ENCODE measurements at regions of chr12 and their contacts with region 1.

Region 1: GRCh38 chr12:107607464-107608392 is 77.9 kb upstream of the PWP1 start:
- DNase-seq: peak; percentile 79 to 83 (median 80)
- ATAC-seq: peak; percentile 97
- H3K4me3 ChIP-seq: no peak overlapping the region
- H3K27ac ChIP-seq: no peak overlapping the region
- H3K4me1 ChIP-seq: no peaks in the 10 kb centered on the region; a peak in 1 of 5 replicates
- H3K27me3 ChIP-seq: peaks cover 10 to 14% of the 10 kb centered on the region in 2 experiments; a peak in 3 of 5 replicates
- CTCF ChIP-seq: peak; percentile 87 to 93 (median 92)
- EP300 ChIP-seq: no peak
- POLR2A ChIP-seq: no peak
- RAD21 ChIP-seq: peak; percentile 61 to 87

Region 2: DNA sequence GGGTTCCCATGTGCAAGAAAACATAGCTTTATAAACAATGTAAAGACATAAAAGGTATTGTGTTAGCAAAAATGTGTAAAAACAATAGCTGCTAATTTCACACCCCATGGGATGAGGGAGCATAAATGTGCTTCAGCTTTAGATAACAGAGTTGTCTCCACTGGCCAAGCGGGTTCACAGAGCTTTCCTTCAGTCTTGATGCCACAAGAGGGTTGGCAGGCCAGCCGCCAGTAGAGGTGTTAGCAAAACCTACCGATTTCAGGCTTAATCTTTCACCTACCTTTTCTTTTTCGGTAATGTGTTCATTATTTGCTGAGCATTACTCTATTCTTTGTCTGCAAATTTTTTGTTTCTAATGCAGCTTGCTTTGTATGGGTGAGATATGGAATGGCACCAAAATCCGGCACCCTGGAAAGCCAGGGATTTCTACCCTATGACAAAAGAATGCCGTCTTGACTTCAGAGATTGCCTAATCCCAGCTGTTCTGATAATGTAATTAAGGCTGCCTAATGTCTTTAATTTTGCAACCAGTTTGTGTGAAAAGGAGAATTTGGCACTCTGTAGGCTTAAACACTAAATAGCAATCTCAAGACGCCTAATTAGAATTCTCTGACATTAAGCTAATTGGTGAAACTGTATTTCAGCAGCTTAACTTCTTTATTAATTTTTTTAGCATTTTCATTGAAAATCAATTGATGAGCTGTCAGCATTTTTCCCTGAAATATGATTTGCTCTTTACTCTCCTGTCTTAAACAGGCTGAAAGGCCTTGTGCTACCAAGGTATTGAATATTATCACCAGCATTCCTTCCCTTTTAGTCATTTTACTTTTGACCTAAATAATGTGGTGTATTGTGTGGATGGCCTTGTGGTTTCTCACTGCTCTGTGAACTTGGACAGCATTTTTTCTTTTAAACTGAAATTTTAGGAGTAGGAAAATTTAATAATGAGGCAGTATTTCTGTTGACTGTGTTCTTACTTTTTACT is 1189.5 kb before region 1 on chr12:
- CTCF ChIA-PET with region 1: no interaction called
- POLR2A ChIA-PET with region 1: no interaction called
- in situ Hi-C with region 1: no loop called
- intact Hi-C with region 1: no loop called
- DNase-seq: no peak
- ATAC-seq: no peak
- H3K4me3 ChIP-seq: no peak overlapping the region
- H3K27ac ChIP-seq: no peak overlapping the region
- H3K4me1 ChIP-seq: no peaks in the 10 kb centered on the region
- H3K27me3 ChIP-seq: no peaks in the 10 kb centered on the region
- CTCF ChIP-seq: no peak
- EP300 ChIP-seq: no peak
- POLR2A ChIP-seq: no peak
- RAD21 ChIP-seq: no peak

Region 3: GRCh38 chr12:106945261-106945851 is 662.4 kb before region 1 on chr12:
- CTCF ChIA-PET with region 1: no interaction called
- POLR2A ChIA-PET with region 1: no interaction called
- in situ Hi-C with region 1: loop called (anchors 25 kb)
- intact Hi-C with region 1: no loop called
- DNase-seq: peak in 1 of 4 experiments; percentile 31
- ATAC-seq: no peak
- H3K4me3 ChIP-seq: no peak overlapping the region
- H3K27ac ChIP-seq: no peak overlapping the region
- H3K4me1 ChIP-seq: peaks cover 10 to 28% of the 10 kb centered on the region in 2 experiments; a peak in 4 of 5 replicates
- H3K27me3 ChIP-seq: no peaks in the 10 kb centered on the region
- CTCF ChIP-seq: no peak
- EP300 ChIP-seq: no peak
- POLR2A ChIP-seq: no peak
- RAD21 ChIP-seq: no peak

Region 4: GRCh38 chr12:107131832-107132616 is 475.7 kb before region 1 on chr12:
- CTCF ChIA-PET with region 1: interaction called, 3 read pairs
- POLR2A ChIA-PET with region 1: interaction called, 3 read pairs
- in situ Hi-C with region 1: loop called (anchors 5 kb)
- intact Hi-C with region 1: loop called (anchors 1 kb)
- DNase-seq: peak; percentile 44 to 67 (median 58)
- ATAC-seq: peak; percentile 84
- H3K4me3 ChIP-seq: no peak overlapping the region
- H3K27ac ChIP-seq: no peak overlapping the region
- H3K4me1 ChIP-seq: no peaks in the 10 kb centered on the region
- H3K27me3 ChIP-seq: no peaks in the 10 kb centered on the region
- CTCF ChIP-seq: peak; percentile 72 to 93 (median 84)
- EP300 ChIP-seq: no peak
- POLR2A ChIP-seq: no peak
- RAD21 ChIP-seq: peak; percentile 82 to 91

Region 5: DNA sequence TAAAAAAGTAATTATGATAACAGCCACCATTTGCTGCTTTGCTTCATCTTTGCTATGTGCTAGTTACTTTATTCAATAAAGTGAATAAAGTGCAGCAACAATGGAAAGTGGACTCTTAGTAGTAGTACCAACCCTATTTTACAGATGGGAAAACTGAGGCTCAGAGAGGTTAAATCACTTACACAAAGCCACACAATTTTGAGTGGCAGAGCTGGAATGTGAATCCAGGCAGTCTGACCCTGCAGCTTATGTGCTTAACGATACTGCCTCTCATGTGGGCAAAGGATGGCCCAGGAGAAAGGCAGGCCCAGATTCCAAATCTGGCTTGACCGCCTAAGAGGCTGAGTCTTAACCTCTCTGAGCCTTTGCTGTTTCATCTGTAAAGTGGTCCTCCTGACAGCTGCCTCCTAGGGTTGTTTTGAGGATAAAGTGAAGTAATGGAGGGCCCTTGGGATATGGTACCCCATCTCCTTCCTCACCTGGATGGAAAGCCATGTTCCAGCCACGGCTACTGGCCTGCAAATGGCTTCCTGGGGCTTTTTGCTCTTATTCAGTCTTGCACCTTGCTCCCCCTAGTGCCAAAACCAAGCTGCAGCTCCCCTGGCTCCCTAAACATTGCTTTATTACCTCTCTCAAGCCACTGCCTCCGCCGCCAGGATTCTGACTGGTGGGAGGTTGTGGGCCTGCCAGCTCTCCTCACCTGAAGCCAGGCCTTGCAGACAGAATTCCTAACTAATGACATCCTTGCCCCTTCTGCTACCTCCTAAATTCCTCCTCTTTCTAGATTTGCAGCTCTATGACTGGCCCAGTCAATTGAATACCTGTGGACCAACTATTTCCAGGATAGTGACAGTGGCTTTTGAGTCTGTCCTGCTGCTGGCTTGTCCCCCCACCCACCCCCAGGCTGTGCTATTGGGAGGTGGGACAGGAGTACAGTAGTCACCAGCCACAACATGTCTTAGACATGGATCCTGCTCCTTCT is 205.4 kb before region 1 on chr12:
- CTCF ChIA-PET with region 1: no interaction called
- POLR2A ChIA-PET with region 1: interaction called, 3 read pairs
- in situ Hi-C with region 1: no loop called
- intact Hi-C with region 1: loop called (anchors 10 kb)
- DNase-seq: peak; percentile 32 to 60 (median 44)
- ATAC-seq: peak; percentile 90
- H3K4me3 ChIP-seq: no peak overlapping the region
- H3K27ac ChIP-seq: no peak overlapping the region
- H3K4me1 ChIP-seq: no peaks in the 10 kb centered on the region
- H3K27me3 ChIP-seq: peaks cover 0 to 3% of the 10 kb centered on the region in 2 experiments; a peak in 1 of 5 replicates
- CTCF ChIP-seq: peak; percentile 65 to 74 (median 73)
- EP300 ChIP-seq: no peak
- POLR2A ChIP-seq: no peak
- RAD21 ChIP-seq: peak; percentile 15 to 60; a peak in 2 of 4 replicates

Region 6: GRCh38 chr12:107448198-107448597 is 159.5 kb before region 1 on chr12:
- CTCF ChIA-PET with region 1: no interaction called
- POLR2A ChIA-PET with region 1: interaction called, 4 read pairs
- in situ Hi-C with region 1: no loop called
- intact Hi-C with region 1: loop called (anchors 5 kb)
- DNase-seq: peak; percentile 18 to 48 (median 32)
- ATAC-seq: peak; percentile 69
- H3K4me3 ChIP-seq: no peak overlapping the region
- H3K27ac ChIP-seq: no peak overlapping the region
- H3K4me1 ChIP-seq: no peaks in the 10 kb centered on the region
- H3K27me3 ChIP-seq: peaks cover 0 to 15% of the 10 kb centered on the region in 2 experiments; a peak in 2 of 5 replicates
- CTCF ChIP-seq: peak; percentile 52 to 62 (median 55)
- EP300 ChIP-seq: no peak
- POLR2A ChIP-seq: no peak
- RAD21 ChIP-seq: no peak

Region 7: DNA sequence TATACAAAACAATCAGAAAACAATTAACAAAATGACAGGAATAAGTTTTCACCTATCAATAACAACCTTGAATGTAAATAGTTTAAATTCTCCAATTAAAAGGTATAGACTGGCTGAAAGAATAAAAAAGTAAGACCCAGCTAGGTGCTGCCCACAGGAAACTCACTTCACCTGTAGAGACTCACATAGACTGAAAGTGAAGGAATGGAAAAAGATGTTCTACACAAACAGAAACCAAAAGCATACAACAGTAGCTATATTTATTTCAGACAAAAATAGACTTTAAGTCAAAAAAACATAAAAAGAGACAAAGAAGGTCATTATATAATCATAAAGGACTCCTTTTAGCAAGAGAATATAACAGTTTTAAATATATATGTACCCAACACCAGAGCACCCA is 74.5 kb before region 1 on chr12:
- CTCF ChIA-PET with region 1: no interaction called
- POLR2A ChIA-PET with region 1: no interaction called
- in situ Hi-C with region 1: no loop called
- intact Hi-C with region 1: no loop called
- DNase-seq: no peak
- ATAC-seq: no peak
- H3K4me3 ChIP-seq: no peak overlapping the region
- H3K27ac ChIP-seq: no peak overlapping the region
- H3K4me1 ChIP-seq: no peaks in the 10 kb centered on the region
- H3K27me3 ChIP-seq: no peaks in the 10 kb centered on the region
- CTCF ChIP-seq: no peak
- EP300 ChIP-seq: no peak
- POLR2A ChIP-seq: no peak
- RAD21 ChIP-seq: no peak

Region 8: DNA sequence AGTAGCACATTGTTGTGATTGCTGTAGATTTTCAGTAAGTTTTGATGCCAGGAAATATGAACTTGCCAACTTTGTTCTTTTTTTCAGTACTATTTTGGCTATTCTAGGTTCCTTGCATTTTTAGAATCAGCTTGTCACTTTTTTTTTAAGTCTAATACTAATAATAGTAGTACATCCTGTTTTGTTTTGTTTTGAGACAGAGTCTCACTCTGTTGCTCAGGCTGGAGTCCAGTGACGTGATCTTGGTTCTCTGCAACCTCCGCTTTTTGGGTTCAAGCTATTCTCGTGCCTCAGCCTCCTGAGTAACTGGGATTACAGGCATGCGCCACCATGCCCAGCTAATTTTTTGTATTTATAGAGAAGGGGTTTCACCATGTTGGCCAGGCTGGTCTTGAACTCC is 94.4 kb after region 1 on chr12:
- CTCF ChIA-PET with region 1: no interaction called
- POLR2A ChIA-PET with region 1: no interaction called
- in situ Hi-C with region 1: no loop called
- intact Hi-C with region 1: no loop called
- DNase-seq: no peak
- ATAC-seq: no peak
- H3K4me3 ChIP-seq: no peak overlapping the region
- H3K27ac ChIP-seq: no peak overlapping the region
- H3K4me1 ChIP-seq: no peaks in the 10 kb centered on the region
- H3K27me3 ChIP-seq: no peaks in the 10 kb centered on the region
- CTCF ChIP-seq: no peak
- EP300 ChIP-seq: no peak
- POLR2A ChIP-seq: no peak
- RAD21 ChIP-seq: no peak

Region 9: DNA sequence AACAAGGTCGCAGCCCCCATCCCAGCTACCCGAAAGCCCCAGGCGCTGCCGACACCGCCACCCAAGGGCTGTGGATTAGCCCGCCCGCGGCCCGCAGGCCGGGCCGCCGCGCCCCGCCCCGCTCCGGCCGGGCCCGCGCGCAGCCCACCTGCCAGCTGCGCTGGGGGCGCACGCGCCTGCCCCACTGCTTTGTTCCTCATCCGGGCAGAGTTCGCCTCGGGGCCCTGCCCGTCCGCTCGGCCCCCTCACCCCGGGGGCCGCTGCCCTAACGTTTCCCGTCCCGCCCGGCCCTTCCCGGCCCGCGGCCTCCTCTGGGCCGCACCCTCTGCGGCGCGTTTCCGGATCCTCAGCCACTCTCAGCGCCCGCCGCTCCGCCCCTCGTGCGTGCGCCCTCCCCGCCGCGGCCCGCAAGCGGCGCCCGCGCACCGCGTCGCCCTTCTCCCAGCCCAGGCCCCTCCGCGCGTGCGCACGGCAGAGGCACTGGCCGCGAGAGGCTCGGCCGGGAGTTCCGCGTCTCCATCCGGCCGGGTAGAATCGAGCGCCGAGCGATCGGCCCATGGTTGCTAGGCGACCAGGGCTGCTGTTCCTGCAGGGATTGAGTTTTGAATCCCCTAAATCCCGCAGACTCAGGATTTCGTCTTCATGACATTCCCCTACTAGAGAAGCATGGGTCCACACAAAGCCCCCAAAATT is 153.2 kb after region 1 on chr12 and contains the start of gene PRDM4:
- CTCF ChIA-PET with region 1: no interaction called
- POLR2A ChIA-PET with region 1: no interaction called
- in situ Hi-C with region 1: no loop called
- intact Hi-C with region 1: no loop called
- DNase-seq: peak; percentile 94 to 98 (median 97)
- ATAC-seq: peak; percentile 96
- H3K4me3 ChIP-seq: peak within 1 kb of the TSS; percentile 82
- H3K27ac ChIP-seq: peak within 1 kb of the TSS; percentile 52
- H3K4me1 ChIP-seq: peaks cover 9 to 13% of the 10 kb centered on the region in 2 experiments; a peak in 4 of 5 replicates
- H3K27me3 ChIP-seq: 0 out of 5 replicates have a peak, but pooled peaks cover 0 to 3% of the 10 kb centered on the region in 2 experiments
- CTCF ChIP-seq: peak in 2 of 3 experiments; percentile 64 to 79; a peak in 5 of 6 replicates
- EP300 ChIP-seq: no peak
- POLR2A ChIP-seq: peak; percentile 70
- RAD21 ChIP-seq: peak; percentile 77 to 87
- polyA plus RNA-seq, gene PRDM4: 5.9 to 6.6 TPM

Measured in K562 (cell line).